CD8-positive, alpha-beta T cell (primary cell): ENCODE measurements at regions of chr10 and their contacts with region 1.

Region 1: DNA sequence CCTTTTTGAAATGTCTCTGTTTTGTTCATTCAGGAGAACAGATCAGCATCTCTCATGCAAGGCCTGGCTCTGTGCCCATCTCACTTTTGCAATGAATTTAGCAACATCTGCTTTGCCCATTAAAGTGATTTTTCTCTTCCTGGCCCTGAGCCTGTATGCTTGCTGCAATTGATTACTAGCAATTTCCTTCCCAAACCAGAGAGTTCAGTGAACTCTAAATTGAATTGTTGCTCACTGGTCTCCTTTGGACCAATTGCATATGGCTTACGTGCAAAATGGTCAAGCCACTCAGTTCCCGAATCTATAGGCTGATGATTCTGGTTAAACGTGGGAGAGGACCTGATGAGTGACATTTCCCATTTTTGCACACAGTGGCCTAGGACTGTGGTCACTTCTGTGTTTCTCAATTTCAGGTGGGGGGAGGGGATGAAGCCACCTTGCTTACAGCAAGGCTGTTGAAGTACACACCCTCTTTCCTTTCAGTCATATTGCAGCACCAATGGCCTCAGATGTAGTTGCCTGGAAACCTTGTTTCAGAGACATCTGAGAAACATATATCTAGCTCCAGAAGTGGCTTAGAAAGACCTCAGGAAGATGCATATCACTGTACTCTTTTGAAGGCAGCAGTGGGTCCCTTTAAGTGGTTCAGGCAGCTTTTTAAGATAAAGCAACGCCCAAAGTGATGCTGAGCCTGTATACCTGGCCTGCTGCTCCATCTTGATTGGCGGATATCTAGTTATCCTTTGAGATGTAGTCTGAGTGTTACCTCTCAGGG is 201.4 kb downstream of the PTEN start:
- DNase-seq: peak in 4 of 9 experiments; percentile 29 to 81 (median 59)
- ATAC-seq: peak; percentile 88
- H3K4me3 ChIP-seq: no peak overlapping the region
- H3K4me3 Mint-ChIP-seq: no peak overlapping the region
- H3K27ac ChIP-seq: peak overlapping the region in 1 of 2 experiments; percentile 55
- H3K27ac Mint-ChIP-seq: peak overlapping the region; percentile 82
- H3K4me1 ChIP-seq: peaks cover 89% of the 10 kb centered on the region
- H3K4me1 Mint-ChIP-seq: peaks cover 79% of the 10 kb centered on the region
- H3K27me3 ChIP-seq: no peaks in the 10 kb centered on the region
- H3K27me3 Mint-ChIP-seq: no peaks in the 10 kb centered on the region
- CTCF ChIP-seq: no peak

Region 2: DNA sequence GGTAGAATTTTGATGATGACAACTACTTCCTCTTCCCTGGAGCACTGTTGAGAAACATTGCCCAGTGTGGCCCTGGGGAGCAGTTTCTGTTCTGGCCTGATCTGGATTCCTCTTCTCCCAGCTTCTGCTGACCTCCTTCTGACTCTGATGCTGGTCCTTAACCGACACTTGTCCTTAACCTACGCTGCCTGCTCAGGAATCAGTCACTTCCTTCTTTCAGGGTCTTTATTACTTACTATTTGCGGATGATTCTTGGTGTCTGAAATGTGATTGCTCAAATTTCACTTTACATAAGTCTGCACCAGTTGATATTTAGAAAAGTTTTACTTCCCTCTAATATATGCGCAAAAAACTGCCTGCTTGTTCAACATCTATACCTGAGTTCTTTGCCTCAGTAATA is 37.2 kb before region 1 on chr10:
- CTCF ChIA-PET with region 1: no interaction called
- POLR2A ChIA-PET with region 1: no interaction called
- intact Hi-C with region 1: loop called in 1 of 2 experiments (anchors 5 kb)
- DNase-seq: peak in 1 of 9 experiments; percentile 11
- ATAC-seq: no peak
- H3K4me3 ChIP-seq: no peak overlapping the region
- H3K4me3 Mint-ChIP-seq: no peak overlapping the region
- H3K27ac ChIP-seq: no peak overlapping the region
- H3K27ac Mint-ChIP-seq: peak overlapping the region; percentile 58
- H3K4me1 ChIP-seq: peaks cover 14% of the 10 kb centered on the region
- H3K4me1 Mint-ChIP-seq: peaks cover 19% of the 10 kb centered on the region
- H3K27me3 ChIP-seq: no peaks in the 10 kb centered on the region
- H3K27me3 Mint-ChIP-seq: no peaks in the 10 kb centered on the region
- CTCF ChIP-seq: no peak

Region 3: GRCh38 chr10:88042160-88043100 is 22.4 kb before region 1 on chr10:
- CTCF ChIA-PET with region 1: no interaction called
- POLR2A ChIA-PET with region 1: no interaction called
- intact Hi-C with region 1: no loop called
- DNase-seq: no peak
- ATAC-seq: no peak
- H3K4me3 ChIP-seq: no peak overlapping the region
- H3K4me3 Mint-ChIP-seq: no peak overlapping the region
- H3K27ac ChIP-seq: no peak overlapping the region
- H3K27ac Mint-ChIP-seq: no peak overlapping the region
- H3K4me1 ChIP-seq: peaks cover 6% of the 10 kb centered on the region
- H3K4me1 Mint-ChIP-seq: peaks cover 23% of the 10 kb centered on the region
- H3K27me3 ChIP-seq: no peaks in the 10 kb centered on the region
- H3K27me3 Mint-ChIP-seq: no peaks in the 10 kb centered on the region
- CTCF ChIP-seq: no peak